ENCODE measurements at regions of chr11 and their contacts with region 1.

Region 1: DNA sequence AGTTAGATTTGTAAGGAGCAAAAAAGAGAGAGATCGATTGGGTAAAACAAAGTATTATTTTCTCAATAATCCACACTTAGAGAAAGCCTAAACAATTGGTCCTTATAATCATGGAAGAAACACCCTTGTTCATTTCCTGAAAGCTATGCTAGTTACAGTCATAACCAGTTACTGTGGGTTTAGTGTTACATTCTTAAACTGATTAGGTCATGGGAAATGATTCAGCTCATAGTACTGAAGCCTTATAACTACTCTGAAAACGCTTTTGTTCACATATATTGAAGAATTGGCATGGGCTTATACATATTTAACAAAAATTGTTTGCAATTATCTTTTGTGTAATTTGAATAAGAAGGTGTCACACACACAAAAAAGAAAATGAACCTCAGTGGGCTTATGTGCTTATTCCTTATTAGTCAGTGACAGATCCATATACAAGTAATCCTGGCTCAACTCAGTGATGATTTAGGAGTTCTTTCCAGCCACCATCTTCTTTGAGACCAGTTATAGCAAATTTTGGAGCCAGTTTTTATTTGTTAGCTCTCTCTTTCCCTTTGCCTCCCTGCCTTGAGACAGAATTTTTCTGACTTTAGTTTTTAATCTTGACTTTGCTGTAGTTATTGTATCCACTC is 198.5 kb upstream of the CTSC start:
- DNase-seq: no peak
- ATAC-seq: peak in 3 of 4 donors; percentile 62 to 84 (median 73)
- H3K4me3 ChIP-seq: no peak overlapping the region
- H3K27ac ChIP-seq: peak overlapping the region; percentile 53
- H3K4me1 ChIP-seq: peaks cover 4% of the 10 kb centered on the region
- H3K27me3 ChIP-seq: no peaks in the 10 kb centered on the region
- CTCF ChIP-seq: no peak

Region 2: DNA sequence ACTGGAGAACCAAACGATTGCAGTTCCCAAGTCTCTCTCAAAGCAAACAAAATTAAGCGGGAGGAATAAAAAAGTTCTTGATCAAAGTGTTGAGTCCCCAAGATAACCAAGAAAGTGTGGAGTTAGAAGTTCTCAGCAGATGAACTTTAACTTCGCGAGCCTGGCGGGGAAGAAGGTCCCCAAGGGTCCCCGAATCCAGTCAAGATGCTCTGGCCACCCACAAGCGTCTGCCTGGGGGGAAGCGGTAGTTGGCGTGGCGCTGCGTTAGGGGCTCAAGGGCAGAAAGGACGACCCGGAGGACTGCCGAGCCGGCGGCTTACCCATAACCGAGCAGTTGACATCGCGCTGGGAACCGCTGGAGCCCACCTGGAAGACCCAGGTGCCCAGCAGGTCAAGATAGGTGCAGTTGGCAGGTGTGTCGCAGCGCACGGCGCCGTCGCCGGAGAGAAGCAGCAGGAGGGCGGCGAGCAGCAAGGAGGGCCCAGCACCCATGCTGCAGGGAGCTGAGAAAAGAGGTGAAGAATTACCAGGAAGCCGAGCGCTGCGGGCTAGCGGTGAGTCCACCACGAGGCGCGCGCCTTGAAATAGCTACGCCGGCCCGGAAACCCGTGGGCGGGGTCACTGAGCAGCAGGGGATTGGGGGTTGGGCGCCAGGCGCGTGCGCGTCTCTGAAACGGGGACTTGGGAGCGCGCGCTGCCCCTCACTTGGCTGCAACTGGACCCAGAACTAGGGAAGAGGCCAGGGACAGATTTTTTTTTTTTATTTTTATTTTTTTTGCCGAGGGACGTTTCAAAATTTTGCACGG is 198.6 kb before region 1 on chr11 and contains the start of gene CTSC:
- intact Hi-C with region 1: loop called in 1 of 2 experiments (anchors 2 kb)
- DNase-seq: peak; percentile 93 to 96
- ATAC-seq: peak; percentile 98
- H3K4me3 ChIP-seq: peak within 1 kb of the TSS; percentile 86
- H3K27ac ChIP-seq: peak within 1 kb of the TSS; percentile 90
- H3K4me1 ChIP-seq: peaks cover 9% of the 10 kb centered on the region
- H3K27me3 ChIP-seq: no peaks in the 10 kb centered on the region
- CTCF ChIP-seq: no peak
- total RNA-seq, gene CTSC: 10.7 to 47.7 (median 14.8) TPM

Region 3: DNA sequence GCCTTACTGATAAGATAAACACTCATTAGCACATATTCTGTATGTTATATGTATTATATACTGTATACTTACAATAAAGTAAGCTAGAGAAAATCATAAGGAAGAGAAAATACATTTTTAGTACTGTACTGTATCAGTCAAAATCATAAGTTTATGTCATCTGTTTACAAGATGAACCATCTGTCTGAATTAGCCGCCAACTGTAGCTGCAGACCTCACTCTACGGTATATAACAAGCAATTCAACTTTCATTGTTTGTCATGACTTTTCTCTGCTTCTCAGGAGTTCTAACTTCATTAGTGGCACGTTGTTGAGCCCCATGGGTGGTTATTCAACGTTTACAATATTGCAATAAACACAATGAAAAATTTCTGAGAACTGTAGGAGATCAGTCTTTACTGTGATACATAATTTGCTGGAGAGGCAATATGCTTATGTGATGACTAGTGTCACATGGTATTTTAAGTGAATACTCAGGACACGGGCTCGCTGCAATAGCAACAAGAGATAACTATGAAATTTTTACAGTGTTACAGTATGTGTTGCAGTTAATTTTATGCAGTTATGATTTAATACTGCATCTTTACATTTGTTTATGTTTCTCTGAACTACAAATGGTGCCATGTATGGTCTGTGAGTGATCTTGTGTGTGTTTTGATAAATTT is 66.3 kb before region 1 on chr11:
- intact Hi-C with region 1: no loop called
- DNase-seq: no peak
- ATAC-seq: no peak
- H3K4me3 ChIP-seq: no peak overlapping the region
- H3K27ac ChIP-seq: no peak overlapping the region
- H3K4me1 ChIP-seq: no peaks in the 10 kb centered on the region
- H3K27me3 ChIP-seq: no peaks in the 10 kb centered on the region
- CTCF ChIP-seq: no peak

Region 4: GRCh38 chr11:88575916-88576315 is 39.9 kb after region 1 on chr11:
- intact Hi-C with region 1: no loop called
- DNase-seq: no peak
- ATAC-seq: no peak
- H3K4me3 ChIP-seq: no peak overlapping the region
- H3K27ac ChIP-seq: no peak overlapping the region
- H3K4me1 ChIP-seq: no peaks in the 10 kb centered on the region
- H3K27me3 ChIP-seq: no peaks in the 10 kb centered on the region
- CTCF ChIP-seq: no peak

Measured in psoas muscle (tissue), 8 donors.